CD8-positive, alpha-beta T cell (primary cell): ENCODE measurements at regions of chr10 and their contacts with region 1.

Region 1: DNA sequence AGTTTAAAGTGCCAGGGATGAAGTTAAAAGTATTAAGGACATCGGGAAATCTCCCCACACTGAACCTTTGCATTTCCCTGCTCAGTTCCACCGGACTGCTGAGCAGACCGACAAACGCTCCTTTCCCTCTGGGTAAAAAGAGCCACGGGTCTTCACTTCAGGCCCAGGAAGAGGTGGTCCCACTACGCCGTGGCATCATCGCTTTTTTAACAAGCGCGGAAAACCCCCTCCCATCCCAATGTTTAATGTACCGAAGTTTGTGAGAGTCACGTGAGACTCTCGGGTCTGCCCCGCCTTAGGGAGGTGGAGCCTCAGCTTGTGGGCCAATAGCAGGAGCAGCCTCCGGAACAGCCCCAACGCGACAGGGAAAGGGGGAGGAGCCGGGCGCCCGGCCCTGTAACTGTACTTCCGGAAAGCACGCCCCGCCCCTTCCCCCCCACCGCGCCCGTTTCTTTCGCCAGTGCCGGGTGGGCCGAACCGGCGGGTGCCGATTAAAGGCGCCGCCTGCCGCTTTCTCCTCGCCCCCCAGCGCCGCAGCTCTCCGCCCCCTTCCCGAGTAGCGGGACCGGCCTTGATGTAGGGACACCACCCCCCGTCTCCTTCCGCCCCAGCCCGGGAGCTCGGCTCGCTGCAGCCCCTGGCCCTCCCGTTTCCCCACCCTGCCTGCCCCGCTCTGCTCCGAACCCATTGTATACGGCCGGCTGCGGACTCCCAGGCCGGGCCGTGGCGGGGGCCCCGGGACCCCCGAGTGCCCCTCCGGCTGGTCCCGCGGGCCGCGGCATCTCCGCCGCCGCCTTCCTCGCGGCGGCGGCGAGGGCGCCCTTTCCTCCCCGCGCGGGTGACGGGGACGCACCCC is 2.2 kb upstream of the TRIM8 start:
- DNase-seq: peak; percentile 94 to 99 (median 98)
- ATAC-seq: peak; percentile 69
- H3K4me3 ChIP-seq: peak overlapping the region; percentile 67 to 81
- H3K4me3 Mint-ChIP-seq: peak overlapping the region; percentile 91
- H3K27ac ChIP-seq: peak overlapping the region; percentile 71 to 94
- H3K27ac Mint-ChIP-seq: peak overlapping the region; percentile 96
- H3K4me1 ChIP-seq: peaks cover 12% of the 10 kb centered on the region
- H3K4me1 Mint-ChIP-seq: peaks cover 26% of the 10 kb centered on the region
- H3K27me3 ChIP-seq: no peaks in the 10 kb centered on the region
- H3K27me3 Mint-ChIP-seq: no peaks in the 10 kb centered on the region
- CTCF ChIP-seq: no peak

Region 2: DNA sequence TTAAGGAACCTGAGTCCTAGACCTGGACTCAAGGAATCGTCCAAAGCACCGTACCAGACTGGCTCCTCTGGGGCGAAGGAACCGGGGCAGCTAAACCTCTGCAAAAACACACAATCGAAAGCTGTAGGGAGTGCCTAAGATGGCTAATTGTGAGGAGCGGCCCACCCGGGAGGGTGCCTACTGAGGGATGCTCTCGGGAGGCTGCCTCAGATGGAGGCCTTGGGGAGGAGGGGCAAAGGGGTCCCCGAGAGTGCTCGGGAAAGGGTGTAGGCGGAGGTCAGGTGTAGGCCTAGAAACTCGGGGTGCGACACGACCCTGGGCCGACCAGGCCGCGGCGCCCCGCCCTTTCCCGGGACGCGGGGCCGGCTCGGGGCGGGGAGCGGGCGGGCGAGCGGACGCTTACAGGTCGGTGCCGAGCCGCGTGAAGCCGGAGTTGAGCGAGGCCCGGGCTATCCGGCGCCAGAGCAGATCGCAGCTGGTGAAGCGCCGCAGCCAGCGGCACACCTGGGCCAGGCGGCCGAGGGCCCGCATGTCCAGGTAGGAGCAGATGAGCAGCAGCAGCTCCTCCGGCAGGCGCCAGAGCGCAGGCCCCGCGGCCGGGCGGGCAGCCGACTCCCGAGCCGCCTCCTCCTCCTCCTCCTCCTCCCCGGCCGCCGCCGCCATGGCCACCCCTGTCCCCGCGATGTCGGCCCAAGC is 948.0 kb before region 1 on chr10:
- CTCF ChIA-PET with region 1: no interaction called
- POLR2A ChIA-PET with region 1: interaction called, 3 read pairs
- intact Hi-C with region 1: loop called in 1 of 2 experiments (anchors 5 kb)
- DNase-seq: peak; percentile 42 to 83 (median 70)
- ATAC-seq: peak; percentile 66
- H3K4me3 ChIP-seq: peak overlapping the region; percentile 85 to 88
- H3K4me3 Mint-ChIP-seq: peak overlapping the region; percentile 97
- H3K27ac ChIP-seq: peak overlapping the region; percentile 97 to 99
- H3K27ac Mint-ChIP-seq: peak overlapping the region; percentile 99
- H3K4me1 ChIP-seq: peaks cover 36% of the 10 kb centered on the region
- H3K4me1 Mint-ChIP-seq: peaks cover 48% of the 10 kb centered on the region
- H3K27me3 ChIP-seq: no peaks in the 10 kb centered on the region
- H3K27me3 Mint-ChIP-seq: no peaks in the 10 kb centered on the region
- CTCF ChIP-seq: no peak

Region 3: GRCh38 chr10:102420810-102421644 is 221.1 kb before region 1 on chr10 and contains the start of gene FBXL15:
- CTCF ChIA-PET with region 1: no interaction called
- POLR2A ChIA-PET with region 1: interaction called, 3 read pairs
- intact Hi-C with region 1: loop called in 1 of 2 experiments (anchors 1 kb)
- DNase-seq: peak; percentile 86 to 98 (median 95)
- ATAC-seq: peak; percentile 70
- H3K4me3 ChIP-seq: peak within 1 kb of the TSS; percentile 75 to 81
- H3K4me3 Mint-ChIP-seq: peak within 1 kb of the TSS; percentile 95
- H3K27ac ChIP-seq: peak within 1 kb of the TSS; percentile 79 to 82
- H3K27ac Mint-ChIP-seq: peak within 1 kb of the TSS; percentile 91
- H3K4me1 ChIP-seq: peaks cover 36% of the 10 kb centered on the region
- H3K4me1 Mint-ChIP-seq: peaks cover 39% of the 10 kb centered on the region
- H3K27me3 ChIP-seq: peaks cover 6 to 17% of the 10 kb centered on the region in 2 experiments
- H3K27me3 Mint-ChIP-seq: peaks cover 15% of the 10 kb centered on the region
- CTCF ChIP-seq: no peak
- total RNA-seq, gene FBXL15: 7.0 to 7.9 TPM

Region 4: GRCh38 chr10:102652170-102652916 is 10.2 kb after region 1 on chr10:
- CTCF ChIA-PET with region 1: interaction called, 12 read pairs
- POLR2A ChIA-PET with region 1: interaction called, 60 read pairs
- intact Hi-C with region 1: no loop called
- DNase-seq: peak in 1 of 9 experiments; percentile 47
- ATAC-seq: peak; percentile 37
- H3K4me3 ChIP-seq: peak overlapping the region in 1 of 2 experiments; percentile 13
- H3K4me3 Mint-ChIP-seq: peak overlapping the region; percentile 78
- H3K27ac ChIP-seq: peak overlapping the region; percentile 12 to 87
- H3K27ac Mint-ChIP-seq: peak overlapping the region; percentile 97
- H3K4me1 ChIP-seq: peaks cover 74% of the 10 kb centered on the region
- H3K4me1 Mint-ChIP-seq: peaks cover 76% of the 10 kb centered on the region
- H3K27me3 ChIP-seq: no peaks in the 10 kb centered on the region
- H3K27me3 Mint-ChIP-seq: no peaks in the 10 kb centered on the region
- CTCF ChIP-seq: no peak

Region 5: DNA sequence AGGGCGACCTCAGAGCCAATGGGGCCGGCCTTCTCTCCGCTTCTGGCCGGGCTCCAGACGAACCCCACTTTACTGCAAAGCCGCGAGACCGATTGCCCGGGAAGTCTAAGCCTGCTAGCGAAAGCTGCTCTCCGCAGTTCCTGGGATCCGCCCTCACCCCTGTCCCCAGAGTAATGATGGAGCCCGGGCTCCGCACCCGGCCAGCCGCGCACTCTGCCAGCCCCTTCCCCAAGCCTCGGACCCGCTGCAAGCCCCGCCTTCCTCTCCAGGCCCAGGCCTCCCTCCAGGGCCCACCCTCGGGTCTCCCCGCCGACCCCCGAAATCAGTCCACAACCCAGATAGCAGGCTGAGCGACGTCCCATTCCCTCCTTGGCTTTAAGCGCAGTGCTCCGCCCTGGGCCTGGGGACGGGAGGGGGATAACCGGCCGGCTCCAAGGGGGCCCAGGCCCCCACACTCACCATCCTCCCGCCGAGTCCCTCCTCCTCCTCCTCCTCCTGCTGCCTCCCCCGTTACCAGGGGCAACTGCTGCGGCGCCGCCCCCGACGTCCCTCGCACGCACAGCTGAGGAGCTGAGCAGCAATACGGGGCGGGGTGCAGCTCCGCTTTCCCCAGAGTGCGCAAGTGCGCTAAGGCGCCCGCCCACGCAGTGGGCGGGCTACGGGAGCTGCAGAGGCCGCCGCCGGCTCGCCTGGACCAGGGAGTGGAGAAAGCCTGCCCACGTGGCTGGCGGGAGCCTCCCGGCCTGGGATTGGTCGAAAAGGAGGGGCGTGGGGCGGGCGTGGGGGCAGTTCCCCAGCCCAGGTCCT is 71.9 kb after region 1 on chr10 and contains the start of gene ARL3:
- CTCF ChIA-PET with region 1: interaction called, 9 read pairs
- POLR2A ChIA-PET with region 1: interaction called, 56 read pairs
- intact Hi-C with region 1: loop called (anchors 1 kb)
- DNase-seq: peak; percentile 79 to 98 (median 94)
- ATAC-seq: peak; percentile 89
- H3K4me3 ChIP-seq: peak within 1 kb of the TSS; percentile 96 to 98
- H3K4me3 Mint-ChIP-seq: peak within 1 kb of the TSS; percentile 97
- H3K27ac ChIP-seq: peak within 1 kb of the TSS; percentile 84 to 91
- H3K27ac Mint-ChIP-seq: peak within 1 kb of the TSS; percentile 94
- H3K4me1 ChIP-seq: peaks cover 21% of the 10 kb centered on the region
- H3K4me1 Mint-ChIP-seq: peaks cover 59% of the 10 kb centered on the region
- H3K27me3 ChIP-seq: no peaks in the 10 kb centered on the region
- H3K27me3 Mint-ChIP-seq: no peaks in the 10 kb centered on the region
- CTCF ChIP-seq: peak; percentile 65
- total RNA-seq, gene ARL3: 0.49 to 0.75 TPM

Region 6: GRCh38 chr10:103367782-103368518 is 725.8 kb after region 1 on chr10 and contains the start of gene TAF5:
- CTCF ChIA-PET with region 1: no interaction called
- POLR2A ChIA-PET with region 1: no interaction called
- intact Hi-C with region 1: loop called (anchors 5 kb)
- DNase-seq: peak; percentile 77 to 97 (median 90)
- ATAC-seq: peak; percentile 66
- H3K4me3 ChIP-seq: peak within 1 kb of the TSS; percentile 57 to 93
- H3K4me3 Mint-ChIP-seq: peak within 1 kb of the TSS; percentile 91
- H3K27ac ChIP-seq: peak within 1 kb of the TSS; percentile 70 to 72
- H3K27ac Mint-ChIP-seq: peak within 1 kb of the TSS; percentile 91
- H3K4me1 ChIP-seq: peaks cover 12% of the 10 kb centered on the region
- H3K4me1 Mint-ChIP-seq: peaks cover 24% of the 10 kb centered on the region
- H3K27me3 ChIP-seq: no peaks in the 10 kb centered on the region
- H3K27me3 Mint-ChIP-seq: no peaks in the 10 kb centered on the region
- CTCF ChIP-seq: no peak
- total RNA-seq, gene TAF5: 3.2 to 4.0 TPM